Posterior cingulate gyrus (tissue), 11 donors: ENCODE measurements at regions of chr2 and their contacts with region 1.

Region 1: GRCh38 chr2:61016808-61017555 is 538 bp upstream of the PEX13 start:
- DNase-seq: peak; percentile 55 to 95 (median 66)

Region 2: DNA sequence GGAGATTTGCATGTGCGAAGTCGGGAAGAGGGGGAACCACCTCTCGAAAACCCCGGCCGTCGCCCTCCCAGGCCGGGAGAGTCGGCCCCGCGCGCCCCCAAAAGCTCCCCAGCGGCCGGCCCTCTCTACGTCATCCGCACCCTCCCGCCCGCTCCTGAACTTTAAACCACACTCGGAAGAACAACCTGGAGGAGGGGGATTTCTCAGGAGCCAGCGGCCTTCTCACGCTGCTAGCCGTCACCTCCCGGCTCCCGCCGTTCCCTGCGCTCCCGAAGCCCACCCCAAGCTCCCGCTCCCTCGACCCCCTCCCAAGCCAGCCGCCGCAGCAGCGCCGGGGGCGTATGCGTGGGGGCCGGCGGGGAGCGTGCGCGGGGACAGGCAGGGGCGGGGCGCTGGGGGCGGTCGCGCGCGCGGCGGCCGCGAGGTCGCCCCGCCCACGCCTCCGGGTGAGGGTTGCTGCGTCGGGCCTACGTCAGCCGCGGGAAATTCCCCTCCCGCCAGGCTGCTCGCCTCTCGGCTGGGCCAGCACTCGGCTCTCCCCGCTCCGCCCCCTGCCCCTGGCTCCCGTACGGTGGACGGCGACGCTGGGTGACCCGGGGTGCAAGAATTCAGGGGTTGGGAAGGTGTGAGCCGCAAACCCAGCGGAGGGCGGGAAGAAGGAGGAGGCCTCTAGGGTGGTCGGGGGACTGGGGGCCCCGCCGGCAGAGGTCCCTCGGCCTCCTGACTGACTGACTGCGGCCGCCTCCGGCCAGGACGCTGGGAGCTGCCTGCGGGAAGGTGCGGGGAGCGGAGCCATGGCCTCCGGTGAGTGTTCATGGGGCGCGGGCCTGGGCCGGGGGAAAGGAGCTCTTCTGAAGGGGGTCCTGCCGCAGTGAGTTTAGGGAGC is 135.7 kb before region 1 on chr2 and contains the start of gene REL:
- intact Hi-C with region 1: loop called (anchors 10 kb)
- DNase-seq: peak; percentile 74 to 98 (median 84)

Region 3: DNA sequence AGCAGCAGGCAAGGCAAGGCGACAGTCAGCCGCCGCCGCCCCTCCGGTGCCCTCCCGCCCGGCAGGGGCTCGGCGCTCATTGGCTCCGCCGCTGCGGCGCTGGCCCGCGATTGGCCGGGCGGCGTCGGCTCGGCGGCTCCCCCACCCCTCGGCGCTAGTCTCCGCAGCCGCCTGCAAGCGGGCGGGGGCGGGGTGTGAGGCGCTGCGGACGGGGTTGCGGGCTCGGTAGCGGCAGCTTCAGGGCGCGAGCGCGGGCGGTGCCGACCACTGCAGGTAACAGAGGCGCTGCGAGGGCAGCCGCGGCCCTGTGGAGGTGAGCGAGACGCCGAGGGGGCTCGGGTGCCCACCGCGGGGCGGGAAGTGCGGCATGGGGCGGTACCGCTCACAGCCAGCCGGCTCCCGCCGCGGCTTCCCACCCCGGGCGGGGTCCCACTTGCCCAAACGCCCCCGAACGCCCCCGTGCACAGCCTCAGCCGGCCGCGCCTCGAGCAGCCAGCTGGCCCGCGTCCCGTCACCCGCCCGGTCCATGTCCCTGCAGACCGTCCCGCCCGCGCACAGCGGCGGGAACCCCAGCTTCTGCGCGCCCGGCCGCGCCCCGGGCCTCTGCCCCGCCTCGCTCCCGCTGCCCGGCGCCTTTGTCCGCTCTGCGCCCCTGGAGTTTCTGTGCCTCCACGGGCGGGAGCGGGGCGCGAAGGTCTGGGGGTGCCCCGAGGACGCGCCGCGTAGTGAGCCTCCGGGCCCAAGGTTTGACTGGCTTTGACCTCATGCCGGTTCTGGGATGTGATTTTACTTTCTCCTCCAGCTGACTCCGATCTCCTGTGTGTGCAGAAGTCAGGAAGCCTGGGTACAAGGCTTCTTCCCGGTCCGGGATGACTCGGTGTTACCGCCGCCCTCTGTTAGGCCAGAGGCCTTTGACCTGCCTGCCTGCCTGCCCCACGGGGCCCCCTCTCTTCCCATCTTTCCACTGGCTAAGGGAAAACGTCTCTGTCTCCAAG is 49.0 kb after region 1 on chr2 and contains the start of gene SANBR:
- intact Hi-C with region 1: loop called (anchors 2 kb)
- DNase-seq: peak; percentile 73 to 98 (median 87)